Activated CD4-positive, alpha-beta T cell treated with anti-CD3 and anti-CD28 coated beads, Interleukin-2, amount 10 ng/mL, durations not matched to agents 24 days and 14 days (primary cell): ENCODE measurements at regions of chr2 and their contacts with region 1.

Region 1: GRCh38 chr2:231713730-231714430 is 5.6 kb downstream of the PTMA start:
- DNase-seq: peak; percentile 96
- H3K4me3 Mint-ChIP-seq: peak overlapping the region; percentile 79
- H3K27ac Mint-ChIP-seq: peak overlapping the region; percentile 95
- H3K4me1 Mint-ChIP-seq: peaks cover 22% of the 10 kb centered on the region
- H3K27me3 Mint-ChIP-seq: no peaks in the 10 kb centered on the region

Region 2: DNA sequence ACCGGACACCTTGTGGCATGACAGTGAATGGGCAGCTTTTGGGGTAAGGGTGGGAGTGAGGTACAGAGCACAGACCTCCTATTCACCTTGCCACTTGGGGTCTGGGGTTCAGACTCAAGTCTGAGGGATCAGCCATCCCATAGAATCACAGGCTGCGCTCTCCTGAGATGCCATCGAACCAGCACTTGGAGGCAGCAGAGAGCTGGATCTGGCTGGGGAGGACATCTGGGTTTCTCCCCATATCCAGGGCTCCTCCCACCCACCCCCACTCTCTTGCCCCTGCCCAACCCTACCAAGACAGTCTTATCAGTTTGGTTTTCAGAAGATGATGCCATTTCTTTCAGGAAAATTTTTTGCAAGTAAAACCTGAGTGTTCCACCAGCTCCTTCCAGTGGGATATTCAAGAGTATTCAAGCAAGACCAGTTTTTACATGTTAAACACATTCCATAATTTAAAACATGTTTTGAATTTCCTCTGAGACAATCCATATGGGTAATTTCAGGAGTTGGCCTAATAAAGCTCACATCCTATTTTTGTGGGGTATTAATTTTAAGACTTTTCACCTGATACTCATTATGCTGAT is 150.4 kb before region 1 on chr2:
- intact Hi-C with region 1: loop called (anchors 1 kb)
- DNase-seq: peak; percentile 80
- H3K4me3 Mint-ChIP-seq: no peak overlapping the region
- H3K27ac Mint-ChIP-seq: no peak overlapping the region
- H3K4me1 Mint-ChIP-seq: peaks cover 2% of the 10 kb centered on the region
- H3K27me3 Mint-ChIP-seq: peaks cover 2% of the 10 kb centered on the region

Region 3: GRCh38 chr2:231648587-231649174 is 65.2 kb before region 1 on chr2:
- intact Hi-C with region 1: loop called (anchors 2 kb)
- DNase-seq: peak; percentile 91
- H3K4me3 Mint-ChIP-seq: no peak overlapping the region
- H3K27ac Mint-ChIP-seq: no peak overlapping the region
- H3K4me1 Mint-ChIP-seq: peaks cover 16% of the 10 kb centered on the region
- H3K27me3 Mint-ChIP-seq: no peaks in the 10 kb centered on the region

Region 4: DNA sequence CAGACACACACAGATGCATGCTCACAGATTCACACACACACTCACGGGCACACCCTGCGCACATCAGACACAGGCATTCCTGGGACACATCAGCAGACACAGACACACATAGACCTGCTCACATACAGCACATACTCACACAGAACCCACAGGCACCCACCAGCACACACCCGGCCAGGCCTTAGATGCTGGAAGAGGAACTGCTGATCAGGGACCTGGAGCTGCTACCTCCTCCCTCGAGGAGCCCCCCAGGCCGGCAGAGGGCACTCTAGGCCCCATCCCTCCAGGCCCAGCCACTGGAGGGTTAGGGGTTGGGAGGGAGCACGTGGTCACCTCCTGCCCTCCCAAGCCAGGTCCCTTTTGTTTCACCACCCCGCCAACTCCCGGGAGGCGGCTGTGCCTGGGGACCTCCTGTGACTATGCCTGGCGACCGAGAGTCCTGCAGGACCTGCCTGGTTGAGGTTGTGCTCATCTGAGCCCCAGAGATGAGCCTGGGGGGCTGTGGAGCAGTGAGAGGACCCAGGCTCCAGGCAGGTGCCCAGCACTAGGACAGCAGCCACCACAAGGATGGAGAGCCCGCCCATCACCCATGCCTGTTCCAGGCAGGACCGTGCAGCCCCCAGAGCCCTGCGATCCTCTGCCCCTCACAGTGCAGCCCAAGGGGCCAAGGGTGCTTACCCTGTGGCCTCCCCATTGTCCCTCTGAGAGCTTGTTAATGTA is 26.6 kb before region 1 on chr2:
- intact Hi-C with region 1: loop called (anchors 1 kb)
- DNase-seq: peak; percentile 87
- H3K4me3 Mint-ChIP-seq: no peak overlapping the region
- H3K27ac Mint-ChIP-seq: no peak overlapping the region
- H3K4me1 Mint-ChIP-seq: peaks cover 5% of the 10 kb centered on the region
- H3K27me3 Mint-ChIP-seq: peaks cover 8% of the 10 kb centered on the region

Region 5: GRCh38 chr2:232420463-232421188 is 706.7 kb after region 1 on chr2:
- intact Hi-C with region 1: no loop called
- DNase-seq: peak; percentile 82
- H3K4me3 Mint-ChIP-seq: peak overlapping the region; percentile 45
- H3K27ac Mint-ChIP-seq: no peak overlapping the region
- H3K4me1 Mint-ChIP-seq: peaks cover 3% of the 10 kb centered on the region
- H3K27me3 Mint-ChIP-seq: peaks cover 59% of the 10 kb centered on the region